Esophagus muscularis mucosa (tissue), 4 donors: ENCODE measurements at regions of chr17 and their contacts with region 1.

Region 1: GRCh38 chr17:30378824-30379302 is at the start of gene CPD:
- DNase-seq: peak; percentile 99
- H3K4me3 ChIP-seq: peak within 1 kb of the TSS; percentile 82 to 98 (median 93)
- H3K27ac ChIP-seq: peak within 1 kb of the TSS; percentile 96 to 98 (median 97)
- H3K4me1 ChIP-seq: peaks cover 8 to 62% (median 53%) of the 10 kb centered on the region in 4 donors
- H3K27me3 ChIP-seq: no peaks in the 10 kb centered on the region
- CTCF ChIP-seq: peak in 1 of 3 experiments; percentile 18
- EP300 ChIP-seq: no peak
- POLR2A ChIP-seq: peak; percentile 92
- total RNA-seq, gene CPD: 67.0 to 141 (median 95.1) TPM

Region 2: GRCh38 chr17:30291543-30292285 is 87.1 kb before region 1 on chr17 and contains the start of gene BLMH:
- intact Hi-C with region 1: loop called (anchors 10 kb)
- DNase-seq: peak; percentile 93
- H3K4me3 ChIP-seq: peak within 1 kb of the TSS; percentile 76 to 92 (median 84)
- H3K27ac ChIP-seq: peak within 1 kb of the TSS; percentile 79 to 86 (median 82)
- H3K4me1 ChIP-seq: peaks cover 14 to 21% (median 15%) of the 10 kb centered on the region in 4 donors
- H3K27me3 ChIP-seq: no peaks in the 10 kb centered on the region
- CTCF ChIP-seq: no peak
- EP300 ChIP-seq: no peak
- POLR2A ChIP-seq: peak; percentile 17
- total RNA-seq, gene BLMH: 16.6 to 22.4 (median 20.8) TPM

Region 3: DNA sequence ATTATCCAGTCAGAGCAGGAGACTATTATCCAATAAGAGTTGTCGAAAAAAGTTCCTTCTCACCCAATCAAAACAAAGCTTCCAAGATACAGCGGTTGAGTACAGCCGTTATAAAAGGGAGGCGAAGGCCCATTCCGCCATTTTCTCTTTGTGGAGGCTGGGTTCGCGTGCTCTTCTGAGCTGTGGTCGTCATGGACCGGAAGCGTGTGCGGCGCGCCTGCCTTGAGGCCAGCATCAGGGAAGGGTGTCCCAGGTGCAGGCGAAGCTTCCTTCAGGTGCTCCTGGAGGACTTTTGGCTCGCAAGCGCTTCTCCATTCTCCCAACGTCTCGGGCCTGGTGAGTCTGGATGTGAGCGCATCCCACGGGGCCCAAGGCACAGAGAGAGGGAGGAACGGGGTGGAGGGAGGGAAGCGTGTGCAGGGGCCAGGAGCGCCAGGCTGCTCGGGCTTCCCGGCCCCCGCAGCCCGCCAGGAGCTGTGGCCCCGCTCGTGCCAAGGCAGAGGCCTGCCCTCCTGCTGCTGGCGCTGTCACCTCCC is 197.5 kb after region 1 on chr17:
- intact Hi-C with region 1: no loop called
- DNase-seq: no peak
- H3K4me3 ChIP-seq: no peak overlapping the region
- H3K27ac ChIP-seq: no peak overlapping the region
- H3K4me1 ChIP-seq: no peaks in the 10 kb centered on the region
- H3K27me3 ChIP-seq: peaks cover 0 to 24% (median 0%) of the 10 kb centered on the region in 4 donors
- CTCF ChIP-seq: no peak
- EP300 ChIP-seq: no peak
- POLR2A ChIP-seq: no peak